Activated CD4-positive, alpha-beta memory T cell treated with anti-CD3 and anti-CD28 coated beads, Interleukin-2, amount 10 ng/mL, durations not matched to agents 7 days and 5 days (primary cell): ENCODE measurements at regions of chr15 and their contacts with region 1.

Region 1: GRCh38 chr15:45179221-45179985 is 8.4 kb downstream of the SHF start:
- DNase-seq: peak; percentile 44
- H3K4me3 Mint-ChIP-seq: no peak overlapping the region
- H3K27ac Mint-ChIP-seq: no peak overlapping the region
- H3K4me1 Mint-ChIP-seq: peaks cover 12% of the 10 kb centered on the region
- H3K27me3 Mint-ChIP-seq: no peaks in the 10 kb centered on the region

Region 2: DNA sequence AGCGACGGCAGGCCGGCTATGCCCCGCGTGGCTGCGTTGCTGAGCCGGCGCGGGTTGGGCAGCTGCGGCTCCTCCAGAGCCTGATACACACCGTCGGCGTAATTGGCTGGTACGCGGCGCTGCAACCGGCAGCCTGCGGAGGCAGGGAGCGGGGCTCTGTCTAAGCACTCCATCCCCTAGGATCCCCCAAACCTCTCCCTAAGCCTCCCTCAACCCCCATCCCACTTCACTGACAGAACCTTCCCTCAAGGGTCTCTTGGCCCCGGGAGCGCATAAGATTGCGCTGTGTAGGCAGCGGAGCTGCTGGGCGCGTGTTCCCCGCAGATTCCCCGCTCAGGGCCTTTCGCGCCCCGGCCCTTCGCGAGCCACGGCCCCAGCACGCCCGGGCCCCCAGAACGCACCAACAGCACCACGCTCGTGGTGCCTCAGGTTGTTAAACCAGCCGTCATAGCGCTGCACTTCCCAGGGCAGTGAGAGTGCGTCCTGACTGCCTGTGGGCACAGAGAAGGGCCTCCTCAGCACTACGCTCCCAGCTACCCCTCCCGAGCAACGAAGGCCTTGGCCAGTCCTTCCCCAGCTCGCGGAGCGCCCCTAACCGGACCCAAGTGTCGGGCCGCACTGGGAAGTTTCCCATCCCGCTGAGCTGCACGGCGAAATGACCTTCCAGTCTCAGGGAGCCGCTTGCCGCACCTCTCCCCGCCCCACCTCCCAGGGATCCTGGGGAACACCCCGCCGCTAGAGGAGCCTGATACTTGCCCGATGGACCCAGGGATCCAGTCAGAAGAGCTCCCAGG is 66.6 kb before region 1 on chr15:
- CTCF ChIA-PET with region 1: no interaction called
- POLR2A ChIA-PET with region 1: no interaction called
- DNase-seq: no peak
- H3K4me3 Mint-ChIP-seq: peak overlapping the region; percentile 0
- H3K27ac Mint-ChIP-seq: no peak overlapping the region
- H3K4me1 Mint-ChIP-seq: peaks cover 24% of the 10 kb centered on the region
- H3K27me3 Mint-ChIP-seq: peaks cover 74% of the 10 kb centered on the region

Region 3: GRCh38 chr15:45156744-45157455 is 22.5 kb before region 1 on chr15:
- CTCF ChIA-PET with region 1: no interaction called
- POLR2A ChIA-PET with region 1: no interaction called
- DNase-seq: no peak
- H3K4me3 Mint-ChIP-seq: no peak overlapping the region
- H3K27ac Mint-ChIP-seq: no peak overlapping the region
- H3K4me1 Mint-ChIP-seq: peaks cover 12% of the 10 kb centered on the region
- H3K27me3 Mint-ChIP-seq: no peaks in the 10 kb centered on the region

Region 4: GRCh38 chr15:45198337-45199135 is 19.1 kb after region 1 on chr15:
- CTCF ChIA-PET with region 1: interaction called, 8 read pairs
- POLR2A ChIA-PET with region 1: interaction called, 12 read pairs
- DNase-seq: peak; percentile 96
- H3K4me3 Mint-ChIP-seq: no peak overlapping the region
- H3K27ac Mint-ChIP-seq: no peak overlapping the region
- H3K4me1 Mint-ChIP-seq: peaks cover 19% of the 10 kb centered on the region
- H3K27me3 Mint-ChIP-seq: peaks cover 2% of the 10 kb centered on the region